ENCODE measurements at regions of chr14 and their contacts with region 1.

Region 1: DNA sequence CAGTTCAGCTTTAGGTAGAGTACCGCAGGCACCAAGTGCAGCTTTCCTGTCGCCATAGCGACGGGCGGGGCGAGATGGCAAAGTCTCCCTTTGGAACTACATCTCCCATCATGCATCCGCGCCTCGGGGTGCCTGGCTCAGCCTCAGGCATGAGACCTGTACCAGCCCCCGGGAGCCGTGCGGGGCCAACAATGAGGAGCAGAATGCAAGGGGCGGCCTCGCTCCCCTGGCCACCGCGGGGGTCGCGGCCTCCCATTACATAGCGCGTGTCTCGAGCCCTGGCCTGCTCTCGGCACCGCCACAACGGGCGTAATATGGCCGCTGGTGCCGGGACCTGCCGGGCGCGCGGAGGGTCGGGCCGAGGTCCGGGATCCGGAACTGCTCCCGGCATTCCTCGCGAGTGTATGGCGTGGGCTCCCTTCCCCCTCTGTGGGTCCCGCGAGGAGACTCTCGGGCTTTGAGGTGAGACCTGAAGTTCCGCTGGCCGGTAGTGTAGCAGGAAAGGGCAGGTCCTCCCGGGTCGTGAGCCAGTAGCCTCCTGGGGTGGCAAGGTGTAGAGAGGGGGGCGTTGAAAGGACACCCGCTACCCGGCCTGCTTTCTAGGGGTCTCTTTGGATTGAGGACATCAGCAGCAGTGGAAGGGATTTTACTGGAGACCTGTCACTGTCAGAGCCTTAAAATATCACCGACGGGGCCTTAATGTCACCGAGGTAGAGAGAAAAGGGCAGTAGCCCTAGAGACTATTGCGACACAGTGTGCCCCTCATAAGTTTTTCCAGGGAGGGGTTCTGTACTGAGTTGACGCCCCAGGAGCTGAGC is at the start of gene THTPA:
- DNase-seq: peak; percentile 86 to 96 (median 90)
- H3K4me3 ChIP-seq: peak within 1 kb of the TSS; percentile 78
- H3K4me3 Mint-ChIP-seq: peak within 1 kb of the TSS; percentile 94 to 99 (median 96)
- H3K27ac ChIP-seq: peak within 1 kb of the TSS; percentile 78
- H3K27ac Mint-ChIP-seq: peak within 1 kb of the TSS; percentile 93 to 99 (median 96)
- H3K4me1 ChIP-seq: peaks cover 24% of the 10 kb centered on the region
- H3K4me1 Mint-ChIP-seq: peaks cover 29 to 37% (median 31%) of the 10 kb centered on the region in 3 donors
- H3K27me3 ChIP-seq: no peaks in the 10 kb centered on the region
- H3K27me3 Mint-ChIP-seq: no peaks in the 10 kb centered on the region
- total RNA-seq, gene THTPA: 13.4 TPM

Region 2: DNA sequence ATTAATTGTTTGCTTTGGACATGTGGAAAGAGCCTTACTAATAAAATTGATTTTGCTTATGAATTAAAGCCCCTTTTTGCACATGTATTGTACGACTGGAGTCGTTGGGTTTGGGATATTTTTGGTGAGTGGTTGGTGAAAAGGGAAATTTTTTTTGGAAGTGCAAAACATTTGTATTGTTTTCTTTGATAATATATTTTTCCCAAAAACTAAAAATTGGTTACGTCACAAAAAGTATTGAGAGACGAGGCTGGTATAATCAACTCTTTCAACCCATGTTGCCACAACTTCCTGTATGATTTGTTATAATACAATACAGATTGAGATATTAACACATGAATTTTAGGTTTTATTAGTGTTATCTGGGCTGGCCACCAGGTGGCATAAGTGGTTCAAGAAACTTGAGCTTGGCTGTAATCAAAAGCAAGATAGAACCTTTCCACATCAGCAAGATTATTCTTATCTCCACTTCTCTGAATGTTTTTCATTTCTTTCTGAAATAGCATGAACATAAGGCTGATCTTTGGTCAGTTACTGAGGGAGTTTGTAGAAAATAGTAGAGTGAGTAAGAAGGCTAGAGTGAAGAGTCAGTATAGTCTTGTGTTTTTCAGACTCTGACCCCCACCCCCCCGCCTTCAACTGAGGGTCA is 77.9 kb before region 1 on chr14:
- CTCF ChIA-PET with region 1: interaction called, 105 read pairs
- POLR2A ChIA-PET with region 1: interaction called, 3 read pairs
- DNase-seq: peak; percentile 46 to 73 (median 55)
- H3K4me3 ChIP-seq: no peak overlapping the region
- H3K4me3 Mint-ChIP-seq: no peak overlapping the region
- H3K27ac ChIP-seq: no peak overlapping the region
- H3K27ac Mint-ChIP-seq: peak overlapping the region in 6 of 8 donors; percentile 30 to 91 (median 70)
- H3K4me1 ChIP-seq: no peaks in the 10 kb centered on the region
- H3K4me1 Mint-ChIP-seq: peaks cover 6 to 10% (median 10%) of the 10 kb centered on the region in 3 donors
- H3K27me3 ChIP-seq: no peaks in the 10 kb centered on the region
- H3K27me3 Mint-ChIP-seq: no peaks in the 10 kb centered on the region

Region 3: GRCh38 chr14:23539248-23540140 is 16.6 kb before region 1 on chr14:
- CTCF ChIA-PET with region 1: interaction called, 52 read pairs
- POLR2A ChIA-PET with region 1: no interaction called
- DNase-seq: peak in 3 of 5 donors; percentile 23 to 51 (median 42)
- H3K4me3 ChIP-seq: no peak overlapping the region
- H3K4me3 Mint-ChIP-seq: no peak overlapping the region
- H3K27ac ChIP-seq: no peak overlapping the region
- H3K27ac Mint-ChIP-seq: no peak overlapping the region
- H3K4me1 ChIP-seq: no peaks in the 10 kb centered on the region
- H3K4me1 Mint-ChIP-seq: no peaks in the 10 kb centered on the region
- H3K27me3 ChIP-seq: no peaks in the 10 kb centered on the region
- H3K27me3 Mint-ChIP-seq: peaks cover 3% of the 10 kb centered on the region in 2 donors

Region 4: GRCh38 chr14:23567192-23568020 is 11.3 kb after region 1 on chr14 and contains the start of gene AP1G2:
- CTCF ChIA-PET with region 1: interaction called, 14 read pairs
- POLR2A ChIA-PET with region 1: interaction called, 6 read pairs
- DNase-seq: peak; percentile 74 to 90 (median 84)
- H3K4me3 ChIP-seq: peak within 1 kb of the TSS; percentile 93
- H3K4me3 Mint-ChIP-seq: peak within 1 kb of the TSS; percentile 98 to 100 (median 99)
- H3K27ac ChIP-seq: peak within 1 kb of the TSS; percentile 82
- H3K27ac Mint-ChIP-seq: peak within 1 kb of the TSS; percentile 96 to 99 (median 98)
- H3K4me1 ChIP-seq: peaks cover 22% of the 10 kb centered on the region
- H3K4me1 Mint-ChIP-seq: peaks cover 31 to 50% (median 34%) of the 10 kb centered on the region in 3 donors
- H3K27me3 ChIP-seq: no peaks in the 10 kb centered on the region
- H3K27me3 Mint-ChIP-seq: peaks cover 5 to 6% of the 10 kb centered on the region in 2 donors
- total RNA-seq, gene AP1G2: 152 to 154 TPM

Measured in CD8-positive, alpha-beta memory T cell (primary cell).